ENCODE measurements at regions of chr4 and their contacts with region 1.

Region 1: GRCh38 chr4:20456407-20456806 is 204.7 kb downstream of the SLIT2 start:
- DNase-seq: no peak
- ATAC-seq: no peak

Region 2: GRCh38 chr4:19213388-19213787 is 1243.0 kb before region 1 on chr4:
- intact Hi-C with region 1: loop called in 1 of 2 experiments (anchors 10 kb)
- DNase-seq: no peak
- ATAC-seq: no peak

Region 3: DNA sequence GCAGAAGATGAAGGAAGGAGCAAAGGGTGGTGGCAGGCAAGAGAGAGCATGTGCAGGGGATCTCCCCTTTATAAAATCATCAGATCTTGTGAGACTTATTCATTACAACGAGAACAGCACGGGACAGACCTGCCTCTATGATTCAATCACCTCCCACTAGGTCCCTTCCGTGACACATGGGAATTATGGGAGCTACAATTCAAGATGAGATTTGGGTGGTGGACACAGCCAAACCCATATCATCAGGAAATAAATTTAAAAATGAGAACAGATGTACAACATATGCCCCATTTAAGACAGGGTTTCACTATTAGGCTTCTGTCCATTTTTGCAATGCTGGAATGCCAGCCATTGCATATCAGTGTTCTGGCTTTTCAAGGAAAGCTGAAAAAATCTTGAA is 551.4 kb before region 1 on chr4:
- intact Hi-C with region 1: no loop called
- DNase-seq: no peak
- ATAC-seq: no peak

Measured in left cardiac atrium (tissue), 4 donors.